B cell (primary cell): ENCODE measurements at regions of chr13 and their contacts with region 1.

Region 1: GRCh38 chr13:50594276-50595051 is 249.0 kb downstream of the DLEU7 start:
- DNase-seq: peak; percentile 83
- ATAC-seq: peak; percentile 89
- H3K4me3 ChIP-seq: peak overlapping the region in 2 of 5 experiments; percentile 10 to 35
- H3K4me3 Mint-ChIP-seq: peak overlapping the region; percentile 75
- H3K27ac ChIP-seq: peak overlapping the region; percentile 79 to 87
- H3K27ac Mint-ChIP-seq: peak overlapping the region; percentile 93
- H3K4me1 ChIP-seq: peaks cover 95 to 99% of the 10 kb centered on the region in 2 donors
- H3K4me1 Mint-ChIP-seq: peaks cover 85% of the 10 kb centered on the region
- H3K27me3 ChIP-seq: no peaks in the 10 kb centered on the region
- H3K27me3 Mint-ChIP-seq: no peaks in the 10 kb centered on the region
- CTCF ChIP-seq: no peak

Region 2: GRCh38 chr13:49681842-49682435 is 912.5 kb before region 1 on chr13:
- CTCF ChIA-PET with region 1: no interaction called
- POLR2A ChIA-PET with region 1: no interaction called
- intact Hi-C with region 1: no loop called
- DNase-seq: no peak
- ATAC-seq: no peak
- H3K4me3 ChIP-seq: no peak overlapping the region
- H3K4me3 Mint-ChIP-seq: no peak overlapping the region
- H3K27ac ChIP-seq: no peak overlapping the region
- H3K27ac Mint-ChIP-seq: no peak overlapping the region
- H3K4me1 ChIP-seq: no peaks in the 10 kb centered on the region
- H3K4me1 Mint-ChIP-seq: peaks cover 4% of the 10 kb centered on the region
- H3K27me3 ChIP-seq: no peaks in the 10 kb centered on the region
- H3K27me3 Mint-ChIP-seq: no peaks in the 10 kb centered on the region
- CTCF ChIP-seq: no peak

Region 3: GRCh38 chr13:49996951-49997895 is 597.2 kb before region 1 on chr13 and contains the start of gene TRIM13:
- CTCF ChIA-PET with region 1: interaction called, 6 read pairs
- POLR2A ChIA-PET with region 1: interaction called, 6 read pairs
- intact Hi-C with region 1: loop called (anchors 5 kb)
- DNase-seq: peak; percentile 93
- ATAC-seq: peak; percentile 74
- H3K4me3 ChIP-seq: peak within 1 kb of the TSS; percentile 78 to 96 (median 94)
- H3K4me3 Mint-ChIP-seq: peak within 1 kb of the TSS; percentile 90
- H3K27ac ChIP-seq: peak within 1 kb of the TSS; percentile 93
- H3K27ac Mint-ChIP-seq: peak within 1 kb of the TSS; percentile 96
- H3K4me1 ChIP-seq: peaks cover 30 to 42% of the 10 kb centered on the region in 2 donors
- H3K4me1 Mint-ChIP-seq: peaks cover 49% of the 10 kb centered on the region
- H3K27me3 ChIP-seq: no peaks in the 10 kb centered on the region
- H3K27me3 Mint-ChIP-seq: no peaks in the 10 kb centered on the region
- CTCF ChIP-seq: peak; percentile 89
- total RNA-seq, gene TRIM13: 45.9 and 52.8 TPM in 2 replicates

Region 4: DNA sequence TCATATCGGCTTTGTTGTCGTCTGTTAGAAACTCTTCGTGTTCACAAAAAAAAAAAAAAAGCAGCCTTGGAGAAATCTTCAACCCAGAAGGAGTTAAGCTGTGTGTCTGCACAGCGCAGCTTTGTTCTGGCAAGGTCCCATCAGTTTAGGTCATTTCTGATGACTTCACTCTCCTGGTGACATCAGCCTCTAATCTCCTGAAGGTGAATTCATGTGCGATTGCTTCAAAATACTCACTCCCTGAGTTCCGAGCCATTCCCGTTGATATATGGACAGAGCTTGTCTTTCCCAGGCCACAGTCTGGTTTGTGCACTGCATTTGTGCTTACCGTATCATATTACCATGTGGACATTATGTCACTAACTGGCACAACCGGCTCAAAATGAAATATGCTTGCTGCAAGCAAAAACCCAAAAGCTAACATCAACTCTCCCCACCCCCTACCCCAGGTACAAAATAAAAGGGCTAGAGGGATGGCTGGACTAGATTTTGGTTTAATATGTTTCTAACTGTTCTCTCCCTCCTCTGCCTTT is 236.8 kb before region 1 on chr13:
- CTCF ChIA-PET with region 1: no interaction called
- POLR2A ChIA-PET with region 1: no interaction called
- intact Hi-C with region 1: loop called (anchors 5 kb)
- DNase-seq: no peak
- ATAC-seq: no peak
- H3K4me3 ChIP-seq: no peak overlapping the region
- H3K4me3 Mint-ChIP-seq: no peak overlapping the region
- H3K27ac ChIP-seq: no peak overlapping the region
- H3K27ac Mint-ChIP-seq: no peak overlapping the region
- H3K4me1 ChIP-seq: peaks cover 30 to 36% of the 10 kb centered on the region in 2 donors
- H3K4me1 Mint-ChIP-seq: peaks cover 47% of the 10 kb centered on the region
- H3K27me3 ChIP-seq: no peaks in the 10 kb centered on the region
- H3K27me3 Mint-ChIP-seq: no peaks in the 10 kb centered on the region
- CTCF ChIP-seq: no peak

Region 5: DNA sequence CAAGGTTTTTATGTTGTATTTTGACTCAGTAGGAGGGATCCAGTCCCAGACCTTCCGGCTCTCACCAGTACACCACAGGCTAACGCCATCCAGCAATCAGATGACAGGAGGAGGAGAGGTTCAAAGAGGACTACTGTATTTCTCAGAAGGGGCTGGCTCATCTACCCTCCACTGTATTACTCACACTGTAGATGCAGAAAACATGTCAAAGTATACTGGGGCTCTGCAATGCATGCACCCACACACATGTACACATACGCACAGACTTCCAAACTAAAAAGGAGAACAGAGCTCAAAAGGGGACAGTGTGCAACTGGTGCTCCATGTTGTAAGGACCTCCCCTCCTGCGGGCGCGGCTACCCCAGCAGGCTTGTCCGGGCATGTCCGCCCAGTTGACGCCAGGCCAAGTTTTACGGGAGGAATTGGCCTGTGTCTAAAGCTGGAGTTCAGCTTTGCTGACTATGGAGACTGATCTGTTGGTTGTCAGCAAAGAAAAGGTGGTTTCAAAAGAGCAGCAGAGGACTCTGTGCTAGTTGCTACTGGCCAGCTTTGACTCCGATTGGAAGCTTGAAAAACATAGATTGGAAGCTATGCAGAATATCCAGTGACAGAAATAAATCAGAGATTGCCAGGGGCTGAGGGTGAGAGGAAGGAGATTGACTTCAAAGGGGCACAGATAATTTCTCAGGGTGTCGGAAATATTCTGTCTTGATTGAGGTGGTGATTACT is 65.1 kb before region 1 on chr13:
- CTCF ChIA-PET with region 1: interaction called, 3 read pairs
- POLR2A ChIA-PET with region 1: no interaction called
- intact Hi-C with region 1: loop called (anchors 5 kb)
- DNase-seq: no peak
- ATAC-seq: no peak
- H3K4me3 ChIP-seq: no peak overlapping the region
- H3K4me3 Mint-ChIP-seq: no peak overlapping the region
- H3K27ac ChIP-seq: no peak overlapping the region
- H3K27ac Mint-ChIP-seq: no peak overlapping the region
- H3K4me1 ChIP-seq: peaks cover 24 to 25% of the 10 kb centered on the region in 2 donors
- H3K4me1 Mint-ChIP-seq: peaks cover 35% of the 10 kb centered on the region
- H3K27me3 ChIP-seq: no peaks in the 10 kb centered on the region
- H3K27me3 Mint-ChIP-seq: no peaks in the 10 kb centered on the region
- CTCF ChIP-seq: no peak

Region 6: GRCh38 chr13:50635504-50635903 is 41.0 kb after region 1 on chr13:
- CTCF ChIA-PET with region 1: interaction called, 9 read pairs
- POLR2A ChIA-PET with region 1: interaction called, 9 read pairs
- intact Hi-C with region 1: loop called (anchors 1 kb)
- DNase-seq: peak; percentile 90
- ATAC-seq: peak; percentile 79
- H3K4me3 ChIP-seq: no peak overlapping the region
- H3K4me3 Mint-ChIP-seq: peak overlapping the region; percentile 63
- H3K27ac ChIP-seq: peak overlapping the region; percentile 92 to 95
- H3K27ac Mint-ChIP-seq: peak overlapping the region; percentile 96
- H3K4me1 ChIP-seq: peaks cover 26 to 30% of the 10 kb centered on the region in 2 donors
- H3K4me1 Mint-ChIP-seq: peaks cover 44% of the 10 kb centered on the region
- H3K27me3 ChIP-seq: no peaks in the 10 kb centered on the region
- H3K27me3 Mint-ChIP-seq: no peaks in the 10 kb centered on the region
- CTCF ChIP-seq: no peak

Region 7: GRCh38 chr13:50760751-50761150 is 166.3 kb after region 1 on chr13:
- CTCF ChIA-PET with region 1: no interaction called
- POLR2A ChIA-PET with region 1: interaction called, 3 read pairs
- intact Hi-C with region 1: loop called (anchors 1 kb)
- DNase-seq: no peak
- ATAC-seq: no peak
- H3K4me3 ChIP-seq: no peak overlapping the region
- H3K4me3 Mint-ChIP-seq: no peak overlapping the region
- H3K27ac ChIP-seq: no peak overlapping the region
- H3K27ac Mint-ChIP-seq: no peak overlapping the region
- H3K4me1 ChIP-seq: peaks cover 48% of the 10 kb centered on the region in 2 donors
- H3K4me1 Mint-ChIP-seq: peaks cover 57% of the 10 kb centered on the region
- H3K27me3 ChIP-seq: no peaks in the 10 kb centered on the region
- H3K27me3 Mint-ChIP-seq: no peaks in the 10 kb centered on the region
- CTCF ChIP-seq: no peak